ENCODE measurements at regions of chr14 and their contacts with region 1.

Region 1: DNA sequence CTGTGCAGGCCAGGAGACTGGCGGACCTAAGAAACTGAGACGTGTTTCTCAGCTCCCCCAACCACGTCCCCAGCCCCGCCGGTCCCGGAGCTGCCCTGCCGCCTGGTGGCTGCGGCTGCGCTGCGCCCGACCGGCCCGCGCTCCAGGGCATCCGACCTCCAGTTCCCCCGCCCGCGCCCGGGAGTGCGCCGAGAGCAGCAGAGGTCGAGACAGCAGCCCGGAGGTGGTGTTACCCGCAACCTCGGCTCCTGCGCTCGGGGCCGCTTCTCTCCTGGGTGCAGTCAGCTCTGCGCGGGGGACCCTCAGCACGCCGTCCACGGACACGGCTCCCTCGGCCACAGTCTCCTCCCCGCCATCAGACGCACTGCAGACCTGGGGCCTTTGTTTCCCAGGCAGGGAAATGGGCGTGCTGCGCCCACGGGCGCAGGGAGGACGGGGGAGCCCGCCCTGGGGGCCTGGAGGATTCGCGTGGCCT is 21.6 kb upstream of the GPR132 start:
- DNase-seq: peak; percentile 68
- H3K4me3 ChIP-seq: peak overlapping the region; percentile 25 to 39 (median 30)
- H3K27ac ChIP-seq: no peak overlapping the region
- H3K4me1 ChIP-seq: peaks cover 19% of the 10 kb centered on the region
- H3K27me3 ChIP-seq: peaks cover 0 to 2% of the 10 kb centered on the region in 2 experiments
- CTCF ChIP-seq: peak; percentile 82 to 89
- POLR2A ChIP-seq: no peak

Region 2: GRCh38 chr14:104932676-104933631 is 153.9 kb before region 1 on chr14:
- CTCF ChIA-PET with region 1: interaction called, 4 read pairs
- POLR2A ChIA-PET with region 1: no interaction called
- dilution Hi-C with region 1: no loop called
- intact Hi-C with region 1: loop called (anchors 1 kb)
- DNase-seq: peak; percentile 60
- H3K4me3 ChIP-seq: peak overlapping the region in 2 of 3 experiments; percentile 48 to 49
- H3K27ac ChIP-seq: no peak overlapping the region
- H3K4me1 ChIP-seq: peaks cover 6% of the 10 kb centered on the region
- H3K27me3 ChIP-seq: peaks cover 3 to 11% of the 10 kb centered on the region in 2 experiments
- CTCF ChIP-seq: peak; percentile 42 to 83
- POLR2A ChIP-seq: no peak

Region 3: DNA sequence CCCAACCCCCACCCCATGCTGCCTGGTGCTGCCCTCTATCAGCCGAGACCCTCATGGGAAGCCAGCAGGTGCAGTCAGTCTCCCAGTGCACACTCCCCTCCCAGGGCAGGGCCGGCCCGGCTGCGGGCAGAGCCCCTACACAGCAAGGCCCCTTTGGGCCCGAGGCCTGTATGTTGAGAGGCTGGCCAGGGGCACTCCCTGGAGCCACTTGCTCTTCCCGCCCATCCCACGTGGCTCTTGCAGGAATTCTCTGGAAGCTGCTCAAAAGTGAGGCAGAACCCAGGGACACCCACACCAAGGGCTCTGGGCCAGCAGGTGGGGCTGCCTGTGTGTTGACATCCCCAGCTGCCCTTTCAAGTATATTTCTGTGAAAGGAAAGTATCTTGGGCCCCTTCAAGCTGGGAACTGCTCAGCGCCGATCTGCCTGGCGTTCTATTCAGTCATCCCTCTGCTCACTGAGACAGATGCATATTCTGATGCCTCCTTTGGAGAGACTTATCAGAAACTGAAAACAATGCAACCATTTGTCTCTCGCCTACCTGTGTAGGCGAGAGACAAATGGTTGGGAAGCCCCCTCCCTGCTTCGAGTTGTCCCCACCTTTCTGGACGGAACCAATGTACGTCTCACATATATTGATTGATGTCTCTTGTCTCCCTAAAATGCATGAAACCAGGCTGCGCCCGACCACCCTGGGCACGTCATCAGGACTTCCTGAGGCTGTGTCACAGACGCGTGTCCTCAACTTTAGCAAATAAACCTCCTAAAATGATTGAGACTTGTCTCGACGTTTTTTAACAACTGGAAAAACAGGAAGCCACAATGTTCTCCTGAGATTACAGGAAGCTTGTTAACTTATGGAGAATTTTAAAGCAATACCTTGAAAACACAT is 27.6 kb before region 1 on chr14:
- CTCF ChIA-PET with region 1: interaction called, 10 read pairs
- POLR2A ChIA-PET with region 1: no interaction called
- dilution Hi-C with region 1: no loop called
- intact Hi-C with region 1: no loop called
- DNase-seq: no peak
- H3K4me3 ChIP-seq: no peak overlapping the region
- H3K27ac ChIP-seq: no peak overlapping the region
- H3K4me1 ChIP-seq: peaks cover 20% of the 10 kb centered on the region
- H3K27me3 ChIP-seq: no peaks in the 10 kb centered on the region
- CTCF ChIP-seq: no peak
- POLR2A ChIP-seq: no peak

Region 4: DNA sequence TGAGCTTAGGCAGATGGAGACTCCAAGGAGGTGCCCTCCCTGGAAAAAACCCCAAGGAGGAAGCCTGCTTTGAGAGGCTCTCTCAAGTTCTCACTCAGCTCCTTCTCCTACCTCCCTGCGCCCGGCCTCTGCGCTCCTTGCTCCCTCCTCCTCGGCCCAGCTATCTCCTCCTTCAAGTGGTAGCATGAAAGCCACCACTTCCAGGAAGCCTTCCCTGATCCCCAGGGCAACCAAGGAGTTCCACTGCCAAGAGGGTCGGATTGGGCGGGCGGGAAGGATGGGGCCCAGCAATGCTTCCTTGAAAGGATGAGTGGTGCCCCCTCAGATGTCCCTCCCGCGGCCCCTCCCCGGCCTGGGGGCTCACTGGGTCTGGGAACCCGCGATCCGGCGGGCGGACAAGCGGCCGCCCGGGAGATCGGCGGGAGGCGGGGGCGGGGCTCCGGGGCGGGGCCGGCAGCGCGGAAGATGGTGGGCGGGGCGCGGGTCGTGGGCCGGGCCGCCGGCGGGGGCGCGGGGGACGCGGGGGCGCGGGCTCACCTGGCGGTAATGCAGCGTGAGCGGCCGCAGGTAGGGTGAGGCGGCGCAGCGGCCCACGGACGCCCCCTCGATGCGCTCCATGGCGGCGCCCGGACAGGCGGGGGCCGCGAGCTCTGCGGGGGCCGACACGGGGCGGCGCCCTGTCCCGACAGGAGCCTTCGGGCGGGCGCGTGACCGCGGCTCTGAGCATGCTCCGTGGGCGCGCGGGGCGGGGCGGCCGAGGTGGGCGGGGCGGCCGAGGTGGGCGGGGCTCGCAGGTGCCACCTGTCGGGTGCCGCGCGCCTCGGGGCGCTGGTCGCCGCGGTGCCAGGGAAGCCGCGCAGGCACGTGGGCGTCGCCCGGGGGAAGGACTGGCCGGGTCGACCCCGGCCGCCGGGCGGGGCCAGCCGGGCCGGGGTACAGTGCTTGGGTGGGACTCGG is 94.0 kb after region 1 on chr14 and contains the start of gene NUDT14:
- CTCF ChIA-PET with region 1: interaction called, 10 read pairs
- POLR2A ChIA-PET with region 1: no interaction called
- dilution Hi-C with region 1: no loop called
- intact Hi-C with region 1: no loop called
- DNase-seq: peak; percentile 57
- H3K4me3 ChIP-seq: peak within 1 kb of the TSS; percentile 20 to 65 (median 53)
- H3K27ac ChIP-seq: no peak within 1 kb of the TSS
- H3K4me1 ChIP-seq: peaks cover 19% of the 10 kb centered on the region
- H3K27me3 ChIP-seq: no peaks in the 10 kb centered on the region
- CTCF ChIP-seq: no peak
- POLR2A ChIP-seq: peak; percentile 49
- total RNA-seq, gene NUDT14: 97.7 and 104 TPM in 2 replicates

Region 5: GRCh38 chr14:105248368-105248756 is 161.5 kb after region 1 on chr14 and contains the start of gene BTBD6:
- CTCF ChIA-PET with region 1: interaction called, 14 read pairs
- POLR2A ChIA-PET with region 1: no interaction called
- dilution Hi-C with region 1: no loop called
- intact Hi-C with region 1: no loop called
- DNase-seq: peak; percentile 84
- H3K4me3 ChIP-seq: peak within 1 kb of the TSS; percentile 45 to 80 (median 52)
- H3K27ac ChIP-seq: peak within 1 kb of the TSS; percentile 74
- H3K4me1 ChIP-seq: peaks cover 7% of the 10 kb centered on the region
- H3K27me3 ChIP-seq: no peaks in the 10 kb centered on the region
- CTCF ChIP-seq: no peak
- POLR2A ChIP-seq: peak; percentile 73
- total RNA-seq, gene BTBD6: 57.7 and 63.1 TPM in 2 replicates

Region 6: DNA sequence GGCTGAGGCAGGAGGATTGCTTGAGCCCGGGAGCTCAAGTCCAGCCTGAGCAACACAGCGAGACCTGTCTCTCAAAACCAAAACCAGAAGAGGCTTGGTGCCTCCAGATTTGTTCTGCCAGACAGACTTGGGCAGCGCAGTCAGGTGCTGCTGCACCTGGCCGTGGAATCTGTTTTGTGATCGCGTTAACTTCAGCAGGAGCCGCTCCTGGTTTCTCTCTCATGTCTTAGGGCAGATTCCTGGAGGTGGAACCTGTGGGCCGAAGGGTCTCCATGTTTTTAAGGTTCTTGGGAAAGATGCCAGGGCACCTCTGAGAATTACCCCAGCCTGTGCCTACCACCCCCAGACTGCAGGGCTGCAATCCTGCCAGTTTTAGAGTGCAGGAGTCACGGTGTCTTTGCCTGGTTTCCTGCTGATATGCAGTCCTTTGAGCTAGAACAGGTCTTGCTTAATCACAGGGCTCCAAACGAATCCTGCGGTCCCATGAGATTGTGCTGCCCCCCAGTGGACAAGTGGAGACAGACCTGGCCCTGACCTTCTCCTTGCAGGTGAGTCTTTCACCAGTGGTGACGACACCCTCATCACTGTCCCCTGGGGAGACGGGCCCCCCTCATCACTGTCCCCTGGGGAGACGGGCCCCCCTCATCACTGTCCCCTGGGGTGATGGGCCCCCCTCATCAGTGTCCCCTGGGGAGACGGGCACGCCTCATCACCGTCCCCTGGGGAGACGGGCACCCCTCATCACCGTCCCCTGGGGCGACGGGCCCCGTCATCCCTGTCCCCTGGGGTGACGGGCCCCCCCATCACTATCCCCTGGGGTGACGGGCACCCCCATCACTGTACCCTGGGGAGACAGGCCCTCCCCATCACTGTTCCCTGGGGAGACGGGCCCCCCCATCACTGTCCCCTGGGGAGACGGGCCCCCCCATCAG is 265.3 kb after region 1 on chr14:
- CTCF ChIA-PET with region 1: interaction called, 58 read pairs
- POLR2A ChIA-PET with region 1: no interaction called
- dilution Hi-C with region 1: no loop called
- intact Hi-C with region 1: loop called (anchors 1 kb)
- DNase-seq: peak; percentile 89
- H3K4me3 ChIP-seq: no peak overlapping the region
- H3K27ac ChIP-seq: no peak overlapping the region
- H3K4me1 ChIP-seq: peaks cover 2% of the 10 kb centered on the region
- H3K27me3 ChIP-seq: no peaks in the 10 kb centered on the region
- CTCF ChIP-seq: peak; percentile 76 to 85
- POLR2A ChIP-seq: no peak

Region 7: GRCh38 chr14:105581551-105582341 is 494.9 kb after region 1 on chr14:
- CTCF ChIA-PET with region 1: no interaction called
- POLR2A ChIA-PET with region 1: no interaction called
- dilution Hi-C with region 1: no loop called
- intact Hi-C with region 1: no loop called
- DNase-seq: no peak
- H3K4me3 ChIP-seq: no peak overlapping the region
- H3K27ac ChIP-seq: no peak overlapping the region
- H3K4me1 ChIP-seq: no peaks in the 10 kb centered on the region
- H3K27me3 ChIP-seq: no peaks in the 10 kb centered on the region
- CTCF ChIP-seq: no peak
- POLR2A ChIP-seq: no peak